ENCODE measurements at regions of chr2 and their contacts with region 1.

Region 1: DNA sequence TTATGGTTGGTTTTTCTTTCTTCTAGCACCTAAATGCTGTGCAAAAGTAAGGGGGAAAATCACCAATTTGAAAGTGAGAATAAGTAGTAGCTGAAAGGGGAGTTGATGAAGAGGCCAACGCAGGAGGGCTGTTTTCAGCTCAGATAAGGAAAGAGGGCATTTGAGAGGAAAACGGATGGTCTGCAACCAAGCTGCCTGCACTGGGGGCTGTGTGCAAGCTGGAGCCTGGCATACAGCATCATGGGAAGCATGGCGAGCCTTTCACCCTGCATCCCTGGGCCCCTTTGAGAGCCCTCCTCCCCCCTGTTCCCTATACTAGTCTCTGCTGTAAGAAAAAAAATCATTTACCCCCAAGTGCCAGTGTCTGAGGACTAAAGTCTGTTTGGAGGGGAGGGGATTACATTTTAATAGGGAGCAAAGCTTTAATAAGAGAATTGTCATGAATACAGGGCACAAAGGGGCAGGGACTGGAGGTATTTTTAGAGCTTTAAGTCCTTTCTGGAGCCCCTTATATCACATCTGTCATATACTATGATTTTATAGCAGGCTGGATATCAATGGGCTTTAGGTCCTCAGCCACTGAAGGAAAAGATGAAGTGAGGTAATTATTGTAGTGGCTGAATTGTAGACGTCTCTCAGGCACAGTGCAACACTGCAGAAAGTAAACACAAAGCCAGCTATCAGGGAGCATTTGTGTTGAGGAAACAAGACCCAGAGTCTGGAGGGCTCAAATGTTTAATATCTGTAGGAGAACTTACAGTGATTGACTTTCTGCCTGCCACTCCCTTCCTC is 120.7 kb downstream of the FSHR start:
- DNase-seq: no peak
- H3K4me3 ChIP-seq: no peak overlapping the region
- H3K27ac ChIP-seq: no peak overlapping the region
- H3K4me1 ChIP-seq: no peaks in the 10 kb centered on the region; a peak in 1 of 4 replicates
- H3K27me3 ChIP-seq: no peaks in the 10 kb centered on the region
- CTCF ChIP-seq: no peak
- EP300 ChIP-seq: no peak
- RAD21 ChIP-seq: no peak

Region 2: GRCh38 chr2:49044350-49045079 is 10.9 kb after region 1 on chr2:
- CTCF ChIA-PET with region 1: interaction called, 11 read pairs
- POLR2A ChIA-PET with region 1: no interaction called
- DNase-seq: peak; percentile 6
- H3K4me3 ChIP-seq: no peak overlapping the region
- H3K27ac ChIP-seq: no peak overlapping the region
- H3K4me1 ChIP-seq: no peaks in the 10 kb centered on the region
- H3K27me3 ChIP-seq: no peaks in the 10 kb centered on the region
- CTCF ChIP-seq: no peak
- EP300 ChIP-seq: no peak
- RAD21 ChIP-seq: peak; percentile 62

Region 3: DNA sequence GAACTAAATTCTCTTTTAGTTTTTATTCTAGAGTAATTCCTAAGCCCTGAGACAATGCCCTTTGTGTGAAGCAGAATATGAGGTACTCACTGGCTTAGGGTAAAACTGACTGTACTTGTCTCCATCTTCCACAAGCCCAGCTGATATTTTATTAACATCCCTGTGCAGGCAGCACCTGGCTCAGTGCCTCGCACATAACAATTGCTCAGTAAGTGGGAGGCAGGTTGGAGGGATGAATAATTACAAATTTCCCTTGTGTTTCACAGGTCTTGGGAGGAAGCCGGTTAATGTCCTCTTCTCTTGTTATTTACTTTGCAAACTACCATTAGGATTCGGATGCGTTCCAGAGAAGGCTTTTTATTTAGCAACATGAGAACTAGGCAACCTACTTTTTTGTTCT is 370.5 kb after region 1 on chr2:
- CTCF ChIA-PET with region 1: no interaction called
- POLR2A ChIA-PET with region 1: no interaction called
- DNase-seq: no peak
- H3K4me3 ChIP-seq: no peak overlapping the region
- H3K27ac ChIP-seq: no peak overlapping the region
- H3K4me1 ChIP-seq: no peaks in the 10 kb centered on the region
- H3K27me3 ChIP-seq: no peaks in the 10 kb centered on the region
- CTCF ChIP-seq: no peak
- EP300 ChIP-seq: no peak
- RAD21 ChIP-seq: no peak